ENCODE measurements at regions of chr19 and their contacts with region 1.

Region 1: DNA sequence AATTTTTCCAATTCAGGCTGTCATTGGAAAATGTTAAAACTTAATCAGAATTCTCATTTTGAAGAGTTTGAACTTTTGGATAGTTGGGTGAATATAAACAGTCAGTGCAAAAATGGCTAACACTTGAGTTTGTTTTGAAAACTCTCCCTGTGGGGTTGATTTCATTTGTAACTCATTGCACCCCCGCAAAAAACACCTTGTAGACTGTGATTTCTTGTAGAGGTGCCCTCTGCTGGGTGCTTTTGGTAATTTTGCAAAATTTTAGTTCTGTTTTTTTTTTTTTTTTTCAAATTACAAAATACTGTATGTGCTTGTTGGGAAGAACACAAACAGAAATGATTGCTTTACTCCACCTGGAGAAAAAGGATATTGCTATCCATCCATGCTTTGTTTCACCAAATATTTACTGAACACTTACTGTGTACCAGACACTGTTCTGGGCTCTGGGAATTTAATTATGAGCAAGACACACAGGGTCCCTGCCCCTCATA is 28.2 kb upstream of the GPI start:
- DNase-seq: no peak
- H3K4me3 ChIP-seq: no peak overlapping the region
- CTCF ChIP-seq: no peak
- POLR2A ChIP-seq: no peak

Region 2: GRCh38 chr19:34232566-34233481 is 104.0 kb before region 1 on chr19:
- intact Hi-C with region 1: loop called (anchors 10 kb)
- DNase-seq: peak; percentile 39 to 89
- H3K4me3 ChIP-seq: no peak overlapping the region
- CTCF ChIP-seq: no peak
- POLR2A ChIP-seq: no peak

Measured in lower leg skin (tissue), 4 donors.